Esophagus muscularis mucosa (tissue), 4 donors: ENCODE measurements at regions of chr16 and their contacts with region 1.

Region 1: DNA sequence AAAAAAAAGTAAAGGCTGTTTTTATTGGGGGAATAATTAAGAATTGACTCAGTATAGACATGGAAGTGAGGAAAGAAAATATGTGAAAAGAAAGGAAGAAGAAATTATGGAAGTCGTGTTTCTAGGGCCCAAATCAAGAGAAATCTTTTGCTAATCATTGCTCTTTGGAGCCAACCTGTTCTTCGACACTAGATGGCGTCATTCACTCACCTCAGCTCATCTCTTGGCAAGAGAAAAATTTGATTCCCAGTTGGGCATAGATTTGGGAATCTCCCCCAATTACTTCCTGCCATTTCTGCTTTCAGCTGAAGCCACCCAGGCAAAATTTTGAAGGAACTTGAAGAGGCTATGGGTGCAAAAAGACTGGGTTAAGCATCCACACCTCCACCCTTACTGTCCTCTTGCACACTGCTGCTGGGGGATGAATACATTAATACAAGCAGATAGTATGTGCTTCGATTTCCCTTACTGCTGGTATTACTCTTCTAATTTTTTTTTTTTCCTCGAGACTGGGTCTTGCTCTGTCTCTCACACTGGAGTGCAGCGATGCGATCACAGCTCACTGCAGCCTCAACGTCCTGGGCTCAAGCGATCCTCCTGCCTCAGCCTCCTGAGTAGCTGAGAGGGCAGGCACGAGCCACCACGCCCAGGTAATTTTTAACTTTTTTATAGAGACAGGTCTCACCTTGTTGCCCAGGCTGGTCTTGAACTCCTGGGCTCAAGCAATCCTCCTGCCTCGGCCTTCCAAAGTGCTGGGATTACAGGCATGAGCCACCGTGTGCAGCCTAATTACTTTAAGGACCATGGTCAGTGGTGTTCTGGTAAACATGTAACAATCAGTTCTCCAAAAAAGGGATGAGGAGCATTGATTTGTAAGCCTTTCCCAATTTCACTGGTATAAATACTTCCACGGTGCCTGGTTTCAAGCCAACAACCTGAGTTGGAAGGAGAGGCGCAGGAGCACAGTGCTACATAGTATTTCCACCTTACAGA is 13.5 kb downstream of the PSMD7 start:
- DNase-seq: no peak
- H3K4me3 ChIP-seq: no peak overlapping the region
- H3K27ac ChIP-seq: no peak overlapping the region
- H3K4me1 ChIP-seq: peaks cover 0 to 4% (median 0%) of the 10 kb centered on the region in 4 donors
- H3K27me3 ChIP-seq: no peaks in the 10 kb centered on the region
- CTCF ChIP-seq: peak; percentile 55 to 70 (median 59)
- EP300 ChIP-seq: no peak
- POLR2A ChIP-seq: no peak

Region 2: GRCh38 chr16:74165566-74166080 is 144.5 kb before region 1 on chr16:
- intact Hi-C with region 1: no loop called
- DNase-seq: no peak
- H3K4me3 ChIP-seq: no peak overlapping the region
- H3K27ac ChIP-seq: no peak overlapping the region
- H3K4me1 ChIP-seq: peaks cover 0 to 19% (median 8%) of the 10 kb centered on the region in 4 donors
- H3K27me3 ChIP-seq: no peaks in the 10 kb centered on the region
- CTCF ChIP-seq: no peak
- EP300 ChIP-seq: no peak
- POLR2A ChIP-seq: no peak

Region 3: GRCh38 chr16:74261068-74261467 is 49.0 kb before region 1 on chr16:
- intact Hi-C with region 1: no loop called
- DNase-seq: no peak
- H3K4me3 ChIP-seq: no peak overlapping the region
- H3K27ac ChIP-seq: no peak overlapping the region
- H3K4me1 ChIP-seq: peaks cover 0 to 19% (median 5%) of the 10 kb centered on the region in 4 donors
- H3K27me3 ChIP-seq: no peaks in the 10 kb centered on the region
- CTCF ChIP-seq: no peak
- EP300 ChIP-seq: no peak
- POLR2A ChIP-seq: no peak

Region 4: DNA sequence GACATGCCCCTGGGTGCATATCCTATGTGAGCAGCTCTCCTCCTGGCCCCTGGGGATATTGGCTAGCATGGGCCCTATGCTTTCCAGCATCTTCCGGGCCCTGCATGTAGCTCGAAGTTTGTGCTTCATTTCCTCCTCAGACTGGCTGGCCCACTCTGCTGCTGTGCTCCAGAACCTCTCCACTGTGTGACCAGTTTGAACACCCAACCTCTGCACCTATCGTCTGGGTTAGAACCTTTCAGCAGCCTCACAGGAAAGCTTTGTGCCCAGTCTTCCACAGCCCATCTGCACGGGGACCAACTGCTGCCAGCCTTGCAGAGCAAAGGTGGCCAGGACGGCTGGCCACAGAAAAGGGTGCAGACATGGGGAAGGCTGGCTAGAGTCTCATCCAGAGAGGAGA is 121.4 kb after region 1 on chr16:
- intact Hi-C with region 1: loop called (anchors 5 kb)
- DNase-seq: no peak
- H3K4me3 ChIP-seq: no peak overlapping the region
- H3K27ac ChIP-seq: no peak overlapping the region
- H3K4me1 ChIP-seq: no peaks in the 10 kb centered on the region
- H3K27me3 ChIP-seq: no peaks in the 10 kb centered on the region
- CTCF ChIP-seq: no peak
- EP300 ChIP-seq: no peak
- POLR2A ChIP-seq: no peak

Region 5: DNA sequence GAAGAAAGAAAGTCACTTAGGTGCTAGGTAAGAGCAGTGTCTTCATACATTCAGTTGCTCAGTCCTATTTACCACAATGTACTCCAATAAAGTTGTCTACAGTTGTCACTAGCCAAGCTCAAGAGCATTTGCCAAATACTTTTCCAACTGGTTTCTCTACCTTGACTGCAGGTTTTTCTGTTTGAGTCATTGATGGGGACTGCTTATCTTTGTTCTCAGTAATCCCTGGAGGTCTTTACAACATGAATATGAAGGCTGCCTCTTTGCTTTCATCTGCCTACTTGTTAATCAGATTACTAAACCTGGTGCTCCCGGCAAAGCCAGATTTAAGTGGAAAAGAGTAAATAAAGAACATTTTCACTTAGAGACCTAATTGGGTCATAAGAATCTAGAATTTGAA is 175.9 kb after region 1 on chr16:
- intact Hi-C with region 1: no loop called
- DNase-seq: no peak
- H3K4me3 ChIP-seq: no peak overlapping the region
- H3K27ac ChIP-seq: no peak overlapping the region
- H3K4me1 ChIP-seq: no peaks in the 10 kb centered on the region
- H3K27me3 ChIP-seq: no peaks in the 10 kb centered on the region
- CTCF ChIP-seq: no peak
- EP300 ChIP-seq: no peak
- POLR2A ChIP-seq: no peak

Region 6: DNA sequence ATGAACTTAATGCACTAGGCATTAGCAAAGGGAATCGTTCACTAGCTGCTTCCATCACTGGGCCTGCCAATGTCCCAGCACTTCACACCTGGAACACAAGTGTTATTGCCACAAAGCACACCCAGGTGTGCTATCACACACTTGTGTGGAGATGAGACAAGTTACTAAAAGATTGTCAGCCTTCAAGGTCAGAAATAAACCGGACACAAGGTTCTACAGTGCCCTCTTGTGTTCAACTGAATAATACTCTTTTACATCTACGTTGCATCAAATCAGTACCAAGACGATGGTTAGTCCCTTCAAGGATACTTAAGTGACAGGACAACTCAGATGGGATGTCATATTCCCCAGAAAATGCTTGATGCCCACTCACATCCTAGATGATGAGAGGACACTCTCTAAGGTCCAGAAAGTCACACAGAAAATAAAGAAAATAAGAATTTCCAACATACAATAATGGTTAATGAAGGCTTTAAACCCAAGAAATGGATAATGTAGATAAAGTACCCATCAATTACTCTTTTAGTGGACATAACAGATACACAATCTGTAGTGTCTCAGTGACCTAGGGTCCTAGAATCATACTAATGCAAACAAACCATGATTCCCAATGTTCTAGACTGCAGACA is 313.2 kb after region 1 on chr16:
- intact Hi-C with region 1: loop called (anchors 10 kb)
- DNase-seq: no peak
- H3K4me3 ChIP-seq: no peak overlapping the region
- H3K27ac ChIP-seq: no peak overlapping the region
- H3K4me1 ChIP-seq: peaks cover 7 to 13% (median 11%) of the 10 kb centered on the region in 4 donors
- H3K27me3 ChIP-seq: no peaks in the 10 kb centered on the region
- CTCF ChIP-seq: peak; percentile 53 to 63 (median 54)
- EP300 ChIP-seq: no peak
- POLR2A ChIP-seq: no peak